Aorta (tissue), 5 donors: ENCODE measurements at regions of chr11 and their contacts with region 1.

Region 1: GRCh38 chr11:63536669-63537292 is at the start of gene PLAAT4:
- DNase-seq: peak in 1 of 2 donors; percentile 71
- ATAC-seq: peak; percentile 76
- H3K4me3 ChIP-seq: peak within 1 kb of the TSS; percentile 36 to 55
- H3K27ac ChIP-seq: peak within 1 kb of the TSS; percentile 45 to 84
- H3K4me1 ChIP-seq: no peaks in the 10 kb centered on the region
- H3K27me3 ChIP-seq: no peaks in the 10 kb centered on the region
- total RNA-seq, gene PLAAT4: 12.4 to 39.8 TPM

Region 2: DNA sequence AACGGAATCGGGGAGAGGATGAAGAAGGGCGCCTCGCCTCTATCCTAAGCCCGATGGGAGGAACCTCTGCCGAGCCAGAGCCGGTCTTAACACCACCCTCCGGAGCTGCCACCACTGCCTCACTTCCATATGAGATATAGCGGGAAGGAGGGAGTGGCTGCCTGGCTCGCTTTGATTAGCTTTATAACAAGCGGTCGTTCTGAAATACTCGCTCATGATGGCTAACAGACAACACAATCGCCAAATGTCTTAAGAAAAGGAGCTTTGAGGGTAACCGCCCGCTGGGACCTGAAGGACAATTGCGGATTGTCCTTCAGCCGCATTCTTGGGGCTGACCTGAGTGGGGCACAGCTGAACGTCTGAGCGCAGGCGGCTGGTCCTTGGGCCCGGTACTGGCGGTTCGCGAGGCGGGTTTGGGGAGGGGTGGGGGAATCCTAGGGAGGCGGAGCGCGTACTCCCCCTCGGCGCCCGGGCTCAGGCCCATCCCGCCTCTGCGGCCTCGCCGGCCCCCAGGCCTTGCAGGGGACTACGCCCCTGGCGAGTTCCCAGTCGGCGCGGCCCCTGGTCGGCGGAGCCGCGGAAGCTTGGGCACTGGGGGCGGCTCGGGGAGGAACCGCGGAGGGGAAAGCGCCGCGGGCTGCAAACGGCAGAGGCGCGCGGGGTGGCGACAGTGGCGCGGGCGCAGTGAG is 46.1 kb before region 1 on chr11 and contains the start of gene PLAAT5:
- intact Hi-C with region 1: loop called in 1 of 2 experiments (anchors 5 kb)
- DNase-seq: peak; percentile 59 to 86
- ATAC-seq: peak; percentile 81
- H3K4me3 ChIP-seq: peak within 1 kb of the TSS; percentile 57 to 73
- H3K27ac ChIP-seq: no peak within 1 kb of the TSS
- H3K4me1 ChIP-seq: peaks cover 0 to 3% of the 10 kb centered on the region in 2 donors
- H3K27me3 ChIP-seq: no peaks in the 10 kb centered on the region
- total RNA-seq, gene PLAAT5: 0.88 to 1.6 TPM

Region 3: DNA sequence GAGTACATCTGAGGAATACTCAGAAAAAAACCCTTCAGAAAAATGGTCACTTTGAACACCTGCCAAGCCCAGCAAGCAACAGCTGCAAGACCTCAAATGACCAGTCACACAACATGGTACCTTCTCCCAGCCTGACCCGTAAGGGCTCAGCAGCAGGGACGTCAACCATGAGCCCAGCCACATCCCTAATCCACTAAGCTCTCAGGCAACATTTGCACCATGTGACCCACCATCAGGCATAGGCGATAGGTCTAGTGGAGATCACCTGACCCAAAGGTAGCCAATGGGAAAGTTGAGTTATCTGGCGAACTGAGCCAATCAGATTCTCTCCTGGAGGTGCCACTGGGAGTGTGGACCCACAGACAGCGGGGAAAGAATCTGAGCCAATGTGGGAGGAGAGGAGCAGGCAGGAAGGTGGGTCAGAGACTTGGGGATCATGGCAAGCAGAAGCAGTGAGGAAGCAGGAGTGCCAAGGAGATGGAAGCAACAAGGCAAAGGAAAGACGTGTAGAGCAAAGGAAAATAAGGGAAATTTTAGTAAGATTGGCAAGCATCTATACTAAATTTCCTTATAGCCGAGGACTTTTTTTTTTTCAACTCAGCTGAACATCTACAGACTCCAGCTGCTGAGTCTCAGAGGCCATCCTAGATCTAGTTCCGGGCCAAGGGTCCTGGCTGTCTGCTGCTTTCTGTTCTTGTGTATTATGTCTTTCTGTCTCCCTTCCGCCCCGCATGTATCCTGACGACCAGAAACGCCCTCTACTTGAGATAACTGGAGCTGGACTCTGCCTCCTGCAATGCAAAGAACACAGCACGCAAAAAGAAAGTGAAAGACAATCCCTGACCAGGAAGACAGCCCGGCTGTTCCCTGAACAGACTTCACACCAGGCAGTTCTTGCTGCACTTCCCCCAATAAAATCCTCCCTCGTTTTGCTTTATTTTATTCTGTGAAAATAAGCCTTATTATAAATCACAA is 37.4 kb after region 1 on chr11:
- intact Hi-C with region 1: loop called in 1 of 2 experiments (anchors 5 kb)
- DNase-seq: no peak
- ATAC-seq: peak; percentile 80
- H3K4me3 ChIP-seq: no peak overlapping the region
- H3K27ac ChIP-seq: no peak overlapping the region
- H3K4me1 ChIP-seq: no peaks in the 10 kb centered on the region
- H3K27me3 ChIP-seq: no peaks in the 10 kb centered on the region

Region 4: DNA sequence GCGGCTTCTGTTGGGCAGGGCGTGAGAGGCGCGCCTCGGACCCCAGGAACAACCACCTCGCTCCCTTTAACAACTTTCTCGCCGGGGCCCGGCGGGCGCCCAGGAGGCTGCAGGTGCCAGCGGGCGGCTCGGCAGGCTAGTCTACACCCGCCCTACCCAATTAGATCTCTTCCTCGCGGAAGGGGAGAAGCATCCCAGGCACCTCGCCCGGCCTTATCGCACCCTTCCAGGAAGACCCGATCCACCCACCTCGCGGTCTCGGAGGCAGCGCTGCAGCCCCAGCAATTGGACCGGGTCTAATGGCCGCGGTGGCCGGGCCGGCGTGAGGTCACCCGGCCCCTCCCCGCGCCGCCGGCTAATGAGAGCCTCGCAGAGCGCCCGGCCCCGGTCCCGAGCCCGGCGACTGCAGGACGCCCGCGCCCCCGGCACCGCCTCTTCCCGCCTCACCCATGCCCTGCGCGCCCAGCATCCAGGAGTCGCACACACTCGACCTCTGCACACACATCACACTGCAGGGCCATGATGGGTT is 77.4 kb after region 1 on chr11 and contains the start of gene PLAAT3:
- intact Hi-C with region 1: loop called in 1 of 2 experiments (anchors 5 kb)
- DNase-seq: peak; percentile 84 to 91
- ATAC-seq: peak; percentile 95
- H3K4me3 ChIP-seq: peak within 1 kb of the TSS; percentile 32 to 95
- H3K27ac ChIP-seq: peak within 1 kb of the TSS; percentile 8 to 76
- H3K4me1 ChIP-seq: no peaks in the 10 kb centered on the region
- H3K27me3 ChIP-seq: no peaks in the 10 kb centered on the region
- total RNA-seq, gene PLAAT3: 52.5 to 62.6 TPM